ENCODE measurements at regions of chr10 and their contacts with region 1.

Region 1: GRCh38 chr10:123994417-123995081 is 98.8 kb downstream of the CHST15 start:
- H3K4me3 ChIP-seq: peak overlapping the region; percentile 29
- H3K27ac ChIP-seq: no peak overlapping the region
- H3K4me1 ChIP-seq: no peaks in the 10 kb centered on the region; the same call in 1 of the 2 replicates
- CTCF ChIP-seq: peak; percentile 97

Region 2: GRCh38 chr10:124005991-124006392 is 11.4 kb after region 1 on chr10:
- CTCF ChIA-PET with region 1: interaction called, 19 read pairs
- POLR2A ChIA-PET with region 1: no interaction called
- H3K4me3 ChIP-seq: no peak overlapping the region
- H3K27ac ChIP-seq: no peak overlapping the region
- H3K4me1 ChIP-seq: peaks cover 2% of the 10 kb centered on the region; the same call in 1 of the 2 replicates
- CTCF ChIP-seq: no peak

Region 3: DNA sequence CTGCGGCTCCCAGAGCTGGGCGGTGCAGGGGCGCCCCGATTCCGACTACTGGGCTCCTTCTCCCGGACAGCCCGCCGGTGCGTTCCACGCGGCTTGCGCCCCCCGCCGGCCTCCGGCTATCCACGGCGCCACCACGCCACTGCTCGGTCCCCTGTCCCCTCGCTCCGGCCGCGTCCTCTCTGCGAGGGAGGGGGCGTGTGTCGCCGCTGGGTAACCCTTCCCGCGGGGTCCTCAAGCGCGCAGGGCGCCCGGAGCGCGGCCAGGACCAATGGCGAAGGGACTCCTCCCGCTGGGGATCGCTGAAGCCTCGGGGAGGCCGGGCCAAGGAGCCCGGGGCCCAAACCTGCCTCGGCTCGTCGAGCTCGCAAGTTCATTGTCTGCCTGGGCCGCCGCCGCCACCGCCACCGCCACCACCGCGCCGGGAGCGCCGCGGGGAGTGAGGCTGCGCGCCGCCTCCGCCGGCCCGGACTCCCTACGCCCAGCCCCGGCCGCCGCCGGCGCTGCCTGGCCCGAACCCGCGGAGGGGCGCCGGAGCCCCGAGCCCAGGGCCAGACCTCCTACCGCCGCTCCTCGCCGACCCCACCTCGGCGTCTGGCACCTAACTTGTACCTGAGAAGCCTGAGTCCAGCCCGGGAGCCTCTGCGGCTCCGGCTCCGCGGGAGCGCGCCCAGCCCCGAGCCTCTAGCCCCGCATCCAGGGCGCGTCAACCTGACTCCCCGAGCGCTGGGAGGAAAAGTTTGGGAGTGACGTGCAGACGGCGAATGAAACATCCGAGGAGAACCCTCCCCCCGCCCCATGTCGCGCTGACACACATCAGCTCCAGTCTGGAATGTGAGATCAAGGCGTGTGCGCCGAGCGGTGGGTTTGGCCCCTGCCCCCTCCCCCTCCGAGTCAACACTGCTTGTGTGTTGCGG is 98.6 kb after region 1 on chr10 and contains the start of gene CHST15:
- CTCF ChIA-PET with region 1: interaction called, 17 read pairs
- POLR2A ChIA-PET with region 1: interaction called, 8 read pairs
- H3K4me3 ChIP-seq: peak within 1 kb of the TSS; percentile 66
- H3K27ac ChIP-seq: peak within 1 kb of the TSS; percentile 90; the same call in 1 of the 2 replicates
- H3K4me1 ChIP-seq: peaks cover 6% of the 10 kb centered on the region
- CTCF ChIP-seq: peak; percentile 96

Region 4: DNA sequence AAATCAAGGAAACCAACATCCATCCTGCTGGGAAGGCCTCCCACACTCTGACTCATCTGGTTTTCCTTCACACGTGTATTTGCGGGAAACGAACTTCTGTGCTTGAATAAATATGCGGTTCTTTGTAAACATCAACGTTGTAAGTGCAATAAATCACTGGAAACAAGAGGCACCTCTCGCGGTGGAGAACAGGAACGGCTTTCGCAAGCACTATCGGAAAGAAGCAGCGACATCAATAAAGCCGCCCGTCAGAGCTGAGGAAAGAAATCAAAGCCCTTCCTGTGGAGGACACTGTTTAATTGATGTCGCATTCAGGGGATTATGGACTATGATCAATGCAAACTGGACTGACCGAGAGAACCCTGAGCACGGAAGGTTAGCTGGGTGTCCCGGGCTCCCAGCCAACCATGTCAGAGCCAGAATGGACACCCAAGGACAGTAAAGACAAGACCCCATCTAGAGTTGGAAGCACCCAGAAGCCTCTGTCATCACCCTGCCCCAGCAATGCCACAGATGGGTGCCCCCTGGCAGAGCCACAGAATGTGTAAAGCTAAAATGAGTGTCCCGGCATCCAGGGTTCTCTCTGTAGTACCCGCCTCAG is 386.6 kb after region 1 on chr10:
- CTCF ChIA-PET with region 1: interaction called, 160 read pairs
- POLR2A ChIA-PET with region 1: no interaction called
- H3K4me3 ChIP-seq: no peak overlapping the region
- H3K27ac ChIP-seq: no peak overlapping the region
- H3K4me1 ChIP-seq: no peaks in the 10 kb centered on the region
- CTCF ChIP-seq: no peak

Region 5: GRCh38 chr10:124394583-124394982 is 400.0 kb after region 1 on chr10:
- CTCF ChIA-PET with region 1: interaction called, 160 read pairs
- POLR2A ChIA-PET with region 1: interaction called, 14 read pairs
- H3K4me3 ChIP-seq: no peak overlapping the region
- H3K27ac ChIP-seq: no peak overlapping the region
- H3K4me1 ChIP-seq: no peaks in the 10 kb centered on the region
- CTCF ChIP-seq: no peak

Region 6: GRCh38 chr10:124418726-124419501 is 424.4 kb after region 1 on chr10 and contains the start of gene OAT:
- CTCF ChIA-PET with region 1: no interaction called
- POLR2A ChIA-PET with region 1: interaction called, 11 read pairs
- H3K4me3 ChIP-seq: peak within 1 kb of the TSS; percentile 87
- H3K27ac ChIP-seq: peak within 1 kb of the TSS; percentile 77
- H3K4me1 ChIP-seq: peaks cover 22% of the 10 kb centered on the region
- CTCF ChIP-seq: peak; percentile 66; the same call in 1 of the 2 replicates